HEK293 (cell line): ENCODE measurements at regions of chr1 and their contacts with region 1.

Region 1: DNA sequence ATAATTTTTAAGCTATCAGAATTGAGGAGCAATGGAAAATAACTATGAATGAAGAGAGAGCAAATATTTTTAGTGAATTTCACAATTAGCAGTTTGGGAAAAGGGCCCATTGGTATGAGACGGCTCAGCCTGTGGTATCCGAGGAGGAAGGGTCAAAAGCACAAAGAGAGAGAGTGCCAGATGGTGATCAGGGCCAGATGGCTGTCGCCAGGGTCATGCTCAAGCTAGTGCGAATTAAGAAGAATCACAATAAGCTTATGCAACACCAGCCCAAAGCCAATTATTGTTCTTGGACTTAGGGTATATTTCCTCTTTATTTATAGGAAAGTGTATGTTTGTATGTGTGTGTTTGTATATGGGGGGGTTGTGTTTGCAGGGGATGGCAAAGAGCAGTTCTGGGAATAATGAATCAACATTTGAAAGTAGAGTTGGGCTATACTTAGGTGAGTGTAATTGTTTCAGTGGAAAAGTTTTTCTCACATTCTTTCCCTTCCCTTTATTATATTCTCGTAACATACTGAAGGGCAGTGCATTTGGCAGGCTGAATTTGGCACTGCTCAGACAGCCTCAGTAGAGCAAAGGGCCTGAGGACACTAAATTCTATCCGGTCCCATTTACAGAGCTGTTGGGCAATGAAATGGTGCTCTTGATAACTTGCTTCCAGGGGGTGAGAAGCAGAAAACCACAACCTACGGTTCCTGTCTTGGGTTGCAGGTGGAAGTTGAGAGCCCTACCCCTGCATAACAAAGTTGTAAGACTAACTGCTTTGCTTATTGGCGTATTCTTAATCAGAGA is 19.5 kb upstream of the DDR2 start:
- H3K4me3 ChIP-seq: no peak overlapping the region
- H3K27ac ChIP-seq: no peak overlapping the region
- H3K4me1 ChIP-seq: no peaks in the 10 kb centered on the region
- CTCF ChIP-seq: no peak

Region 2: GRCh38 chr1:162596514-162597170 is 16.2 kb before region 1 on chr1:
- CTCF ChIA-PET with region 1: interaction called, 20 read pairs
- POLR2A ChIA-PET with region 1: no interaction called
- H3K4me3 ChIP-seq: no peak overlapping the region
- H3K27ac ChIP-seq: no peak overlapping the region
- H3K4me1 ChIP-seq: no peaks in the 10 kb centered on the region
- CTCF ChIP-seq: no peak

Region 3: GRCh38 chr1:162627662-162628296 is 15.0 kb after region 1 on chr1:
- CTCF ChIA-PET with region 1: interaction called, 12 read pairs
- POLR2A ChIA-PET with region 1: no interaction called
- H3K4me3 ChIP-seq: no peak overlapping the region
- H3K27ac ChIP-seq: no peak overlapping the region
- H3K4me1 ChIP-seq: peaks cover 2% of the 10 kb centered on the region; the same call in 1 of the 2 replicates
- CTCF ChIP-seq: peak; percentile 20; the same call in 1 of the 2 replicates

Region 4: DNA sequence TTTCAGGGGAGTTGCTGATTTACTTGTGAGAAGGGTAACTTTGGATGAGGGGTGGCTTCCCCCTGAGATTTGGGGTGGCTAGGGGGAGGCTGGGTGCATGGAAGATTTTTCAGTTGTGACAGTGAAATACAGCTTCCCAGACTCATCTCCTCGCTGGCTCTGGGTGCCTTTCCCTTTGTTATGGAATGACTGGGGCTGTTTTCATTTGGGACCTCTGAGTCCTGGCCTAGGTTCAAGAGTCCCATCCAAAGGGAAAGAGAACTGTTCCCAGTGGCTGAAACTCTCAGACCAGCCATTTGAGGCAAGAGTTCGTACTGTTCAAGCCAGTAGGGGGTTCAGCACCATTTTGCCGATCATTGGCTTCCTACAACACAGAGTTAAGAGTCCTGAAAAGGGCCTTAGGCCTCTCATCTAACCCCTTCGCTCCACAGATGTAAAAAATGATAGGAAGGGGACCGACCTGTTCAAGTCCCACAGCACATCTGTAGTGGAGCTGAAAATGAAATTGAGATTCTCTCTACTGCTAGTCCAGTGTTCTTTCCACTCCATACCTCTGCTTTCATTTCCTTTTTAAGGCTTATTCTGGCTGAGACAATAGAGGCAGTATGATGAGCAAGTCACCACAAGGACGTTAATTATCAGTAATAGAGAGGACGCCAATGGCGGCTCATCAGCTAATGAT is 20.4 kb after region 1 on chr1:
- CTCF ChIA-PET with region 1: interaction called, 10 read pairs
- POLR2A ChIA-PET with region 1: no interaction called
- H3K4me3 ChIP-seq: no peak overlapping the region
- H3K27ac ChIP-seq: no peak overlapping the region
- H3K4me1 ChIP-seq: peaks cover 2% of the 10 kb centered on the region; the same call in 1 of the 2 replicates
- CTCF ChIP-seq: 0 out of 2 replicates have a peak, but pooled peaks have one; percentile 30

Region 5: GRCh38 chr1:162899422-162900146 is 286.8 kb after region 1 on chr1:
- CTCF ChIA-PET with region 1: no interaction called
- POLR2A ChIA-PET with region 1: no interaction called
- H3K4me3 ChIP-seq: no peak overlapping the region
- H3K27ac ChIP-seq: no peak overlapping the region
- H3K4me1 ChIP-seq: no peaks in the 10 kb centered on the region
- CTCF ChIP-seq: no peak